ENCODE measurements at regions of chr20 and their contacts with region 1.

Region 1: DNA sequence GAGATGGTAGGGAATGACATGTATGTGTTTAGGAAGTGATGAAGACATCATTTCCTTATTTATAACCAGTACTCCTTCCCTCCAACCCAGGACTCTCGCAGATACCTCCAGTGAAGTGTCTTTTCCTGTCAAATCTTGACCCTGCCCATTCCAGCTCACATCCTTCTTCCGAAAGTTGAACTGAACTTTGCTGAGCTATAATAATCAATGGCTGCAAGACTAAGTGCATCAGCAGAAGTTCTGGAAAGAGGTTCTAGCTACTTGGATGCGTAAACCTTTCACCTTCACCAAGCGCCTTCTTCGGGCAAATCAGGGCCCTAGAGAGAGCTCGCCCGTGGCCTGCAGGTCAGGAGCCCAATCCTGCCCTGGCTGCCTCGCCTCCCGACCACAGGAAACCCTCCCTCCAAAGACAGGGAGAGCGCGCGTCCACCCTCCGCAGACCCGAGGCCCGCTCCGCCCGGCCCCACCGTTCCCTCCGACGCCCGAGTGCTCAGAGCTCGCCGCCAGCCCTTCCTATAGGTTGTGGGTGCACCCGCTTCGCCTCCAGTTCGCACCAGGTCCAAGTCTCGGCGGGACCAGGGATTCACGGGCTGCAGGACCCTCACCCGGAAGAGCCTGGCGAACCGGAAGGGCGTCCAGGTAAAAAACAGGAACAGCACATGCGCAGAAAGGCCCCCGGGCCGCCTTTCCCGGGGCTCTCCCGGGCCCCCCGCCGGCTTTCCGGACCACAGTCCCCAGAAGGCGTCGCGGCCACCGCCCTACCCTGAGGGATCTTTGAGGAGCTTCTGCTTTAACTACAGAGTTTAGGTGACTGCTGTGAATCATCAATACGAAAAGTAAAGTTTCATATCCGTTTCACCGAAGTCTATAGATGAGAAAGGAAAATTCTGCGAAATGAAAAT is at the start of gene ZNF334:
- DNase-seq: peak; percentile 77
- H3K4me3 Mint-ChIP-seq: peak within 1 kb of the TSS; percentile 79
- H3K27ac Mint-ChIP-seq: peak within 1 kb of the TSS; percentile 39
- H3K4me1 Mint-ChIP-seq: peaks cover 29% of the 10 kb centered on the region
- H3K27me3 Mint-ChIP-seq: peaks cover 39% of the 10 kb centered on the region
- total RNA-seq, gene ZNF334: 1.7 to 2.1 TPM

Region 2: DNA sequence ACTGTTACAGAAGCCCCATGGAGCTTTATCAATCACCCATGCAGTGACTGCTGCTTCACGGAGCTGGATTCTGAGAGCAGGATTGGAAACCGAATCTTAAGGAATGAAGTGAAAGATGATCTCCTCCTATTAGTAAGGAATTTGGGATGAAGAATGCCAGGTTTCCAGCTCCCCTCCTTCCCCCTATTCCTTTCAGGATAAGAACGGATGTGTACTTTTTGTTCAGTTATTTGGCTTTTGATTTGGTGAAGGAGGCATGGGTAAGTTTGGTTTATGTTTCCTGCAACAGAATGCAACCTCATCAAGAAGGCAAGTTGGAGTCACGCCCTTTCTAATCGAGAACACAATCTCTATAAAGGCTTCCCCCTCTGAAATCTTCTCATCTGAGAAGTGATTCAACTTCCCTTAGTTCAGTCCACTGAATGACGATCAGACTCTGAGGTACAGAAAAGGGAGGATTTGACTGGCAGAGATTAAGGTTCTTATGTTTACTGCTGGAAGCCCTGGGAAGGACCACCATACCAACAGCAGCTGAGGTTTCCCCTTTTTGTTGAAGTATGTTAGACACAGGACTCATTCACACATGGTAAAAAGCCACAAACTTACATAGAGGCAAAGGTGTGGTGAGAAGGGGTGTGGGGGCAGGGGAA is 112.2 kb before region 1 on chr20:
- CTCF ChIA-PET with region 1: no interaction called
- intact Hi-C with region 1: loop called (anchors 2 kb)
- DNase-seq: peak; percentile 63
- H3K4me3 Mint-ChIP-seq: peak overlapping the region; percentile 59
- H3K27ac Mint-ChIP-seq: peak overlapping the region; percentile 91
- H3K4me1 Mint-ChIP-seq: peaks cover 60% of the 10 kb centered on the region
- H3K27me3 Mint-ChIP-seq: no peaks in the 10 kb centered on the region

Region 3: GRCh38 chr20:46545077-46545826 is 32.1 kb after region 1 on chr20:
- CTCF ChIA-PET with region 1: no interaction called
- intact Hi-C with region 1: loop called (anchors 1 kb)
- DNase-seq: peak; percentile 77
- H3K4me3 Mint-ChIP-seq: no peak overlapping the region
- H3K27ac Mint-ChIP-seq: peak overlapping the region; percentile 71
- H3K4me1 Mint-ChIP-seq: peaks cover 7% of the 10 kb centered on the region
- H3K27me3 Mint-ChIP-seq: peaks cover 9% of the 10 kb centered on the region

Region 4: GRCh38 chr20:46552460-46553420 is 39.5 kb after region 1 on chr20:
- CTCF ChIA-PET with region 1: no interaction called
- intact Hi-C with region 1: loop called (anchors 1 kb)
- DNase-seq: peak; percentile 80
- H3K4me3 Mint-ChIP-seq: no peak overlapping the region
- H3K27ac Mint-ChIP-seq: peak overlapping the region; percentile 65
- H3K4me1 Mint-ChIP-seq: peaks cover 20% of the 10 kb centered on the region
- H3K27me3 Mint-ChIP-seq: peaks cover 3% of the 10 kb centered on the region